Activated naive CD4-positive, alpha-beta T cell treated with anti-CD3 and anti-CD28 coated beads for 36 hours (primary cell): ENCODE measurements at regions of chr15 and their contacts with region 1.

Region 1: GRCh38 chr15:35751413-35752133 is 205.6 kb upstream of the DPH6 start:
- DNase-seq: peak; percentile 73
- H3K4me3 Mint-ChIP-seq: no peak overlapping the region
- H3K27ac Mint-ChIP-seq: no peak overlapping the region
- H3K4me1 Mint-ChIP-seq: no peaks in the 10 kb centered on the region
- H3K27me3 Mint-ChIP-seq: peaks cover 9% of the 10 kb centered on the region

Region 2: GRCh38 chr15:35519541-35520149 is 231.9 kb before region 1 on chr15:
- CTCF ChIA-PET with region 1: no interaction called
- intact Hi-C with region 1: loop called (anchors 5 kb)
- DNase-seq: no peak
- H3K4me3 Mint-ChIP-seq: no peak overlapping the region
- H3K27ac Mint-ChIP-seq: no peak overlapping the region
- H3K4me1 Mint-ChIP-seq: peaks cover 6% of the 10 kb centered on the region
- H3K27me3 Mint-ChIP-seq: no peaks in the 10 kb centered on the region

Region 3: GRCh38 chr15:35764661-35765519 is 13.3 kb after region 1 on chr15:
- CTCF ChIA-PET with region 1: interaction called, 21 read pairs
- intact Hi-C with region 1: no loop called
- DNase-seq: no peak
- H3K4me3 Mint-ChIP-seq: no peak overlapping the region
- H3K27ac Mint-ChIP-seq: no peak overlapping the region
- H3K4me1 Mint-ChIP-seq: no peaks in the 10 kb centered on the region
- H3K27me3 Mint-ChIP-seq: no peaks in the 10 kb centered on the region

Region 4: DNA sequence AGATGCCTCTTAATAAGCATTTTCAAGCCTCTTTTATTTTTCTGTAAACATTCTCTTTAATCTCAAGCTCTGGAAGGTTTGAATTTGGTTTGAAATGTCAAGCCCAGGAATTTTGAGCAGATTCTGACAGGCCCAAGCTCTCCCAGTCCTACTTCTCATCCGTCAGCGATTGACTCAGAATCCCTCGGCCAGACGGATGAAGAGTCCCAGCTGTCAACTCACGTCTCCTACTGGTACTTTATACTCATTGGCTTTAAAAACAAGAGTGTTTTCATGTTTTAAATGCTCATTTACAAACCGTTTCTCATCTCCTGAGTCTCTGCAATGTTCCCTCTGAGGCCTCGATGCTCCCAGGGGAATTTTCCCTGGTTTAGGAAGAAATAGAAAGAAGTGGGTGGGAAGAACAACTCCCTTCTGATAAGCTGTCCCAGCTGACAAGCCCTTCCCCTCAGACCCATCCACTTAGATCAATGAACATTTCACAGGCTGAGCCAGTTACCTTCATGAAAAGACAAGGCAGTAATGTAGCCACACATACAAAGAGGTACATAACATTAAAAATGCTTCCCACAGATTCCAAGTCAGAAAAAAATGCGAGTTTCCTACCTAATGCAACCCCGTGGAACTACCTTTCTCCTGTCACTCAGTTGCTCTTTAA is 272.6 kb after region 1 on chr15:
- CTCF ChIA-PET with region 1: no interaction called
- intact Hi-C with region 1: no loop called
- DNase-seq: no peak
- H3K4me3 Mint-ChIP-seq: no peak overlapping the region
- H3K27ac Mint-ChIP-seq: no peak overlapping the region
- H3K4me1 Mint-ChIP-seq: no peaks in the 10 kb centered on the region
- H3K27me3 Mint-ChIP-seq: peaks cover 3% of the 10 kb centered on the region